ENCODE measurements at regions of chr6 and their contacts with region 1.

Region 1: GRCh38 chr6:52162940-52163908 is 23.0 kb upstream of the IL17A start:
- DNase-seq: no peak
- H3K4me3 Mint-ChIP-seq: no peak overlapping the region
- H3K27ac Mint-ChIP-seq: peak overlapping the region; percentile 60
- H3K4me1 Mint-ChIP-seq: peaks cover 44% of the 10 kb centered on the region
- H3K27me3 Mint-ChIP-seq: peaks cover 30% of the 10 kb centered on the region

Region 2: DNA sequence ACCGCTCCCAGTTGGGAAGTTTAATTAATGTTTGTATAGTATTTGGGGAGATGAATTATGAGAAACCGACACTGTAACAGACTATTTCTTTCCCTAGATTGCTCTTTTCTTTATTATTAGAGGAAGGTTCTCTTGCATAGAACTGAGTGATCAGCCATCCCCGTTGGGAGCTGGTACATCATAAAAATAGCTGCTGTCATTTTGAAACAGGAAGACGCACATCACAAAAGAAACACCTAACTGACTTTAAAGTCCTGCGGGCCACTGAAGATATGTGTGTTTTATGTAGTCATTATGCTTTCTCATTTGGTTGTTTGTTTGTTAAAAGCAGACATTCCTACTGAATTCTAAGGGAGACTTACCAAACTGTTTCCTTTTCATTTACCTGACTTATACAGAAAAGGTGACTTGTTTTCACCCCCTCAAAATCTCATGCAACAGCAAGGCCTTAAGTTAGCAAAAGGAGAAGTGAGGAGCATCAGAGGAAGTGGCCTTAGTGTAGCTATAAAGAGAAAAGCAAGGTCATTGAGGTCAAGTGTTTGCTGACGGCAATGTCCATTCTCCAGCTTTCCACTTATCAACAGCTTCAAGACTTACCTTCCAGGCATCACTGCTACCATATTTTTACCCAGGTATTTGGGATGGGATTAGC is 166.8 kb before region 1 on chr6:
- CTCF ChIA-PET with region 1: no interaction called
- POLR2A ChIA-PET with region 1: no interaction called
- intact Hi-C with region 1: no loop called
- DNase-seq: no peak
- H3K4me3 Mint-ChIP-seq: no peak overlapping the region
- H3K27ac Mint-ChIP-seq: no peak overlapping the region
- H3K4me1 Mint-ChIP-seq: no peaks in the 10 kb centered on the region
- H3K27me3 Mint-ChIP-seq: peaks cover 20% of the 10 kb centered on the region

Region 3: GRCh38 chr6:52201046-52201445 is 37.8 kb after region 1 on chr6:
- CTCF ChIA-PET with region 1: no interaction called
- POLR2A ChIA-PET with region 1: no interaction called
- intact Hi-C with region 1: loop called (anchors 2 kb)
- DNase-seq: no peak
- H3K4me3 Mint-ChIP-seq: no peak overlapping the region
- H3K27ac Mint-ChIP-seq: peak overlapping the region; percentile 61
- H3K4me1 Mint-ChIP-seq: peaks cover 9% of the 10 kb centered on the region
- H3K27me3 Mint-ChIP-seq: peaks cover 22% of the 10 kb centered on the region

Region 4: DNA sequence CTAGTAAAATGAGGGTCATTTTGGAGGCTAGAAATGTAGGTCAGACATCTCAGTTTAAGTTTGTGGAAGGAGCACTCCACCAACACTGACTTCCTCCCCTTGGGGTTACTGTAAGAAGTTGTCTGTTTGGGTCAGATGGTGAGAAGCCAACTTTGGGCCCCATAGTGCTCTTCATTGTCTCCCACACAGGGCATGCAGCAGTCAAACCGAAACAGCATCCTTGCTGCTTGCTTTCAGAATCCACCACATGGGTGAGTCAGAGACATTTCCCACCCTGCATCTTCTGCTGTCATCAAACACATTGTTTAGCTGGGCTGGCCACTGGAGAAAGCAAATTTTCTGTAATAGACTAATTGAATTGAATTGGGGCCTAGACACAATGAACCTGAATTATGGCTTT is 64.3 kb after region 1 on chr6:
- CTCF ChIA-PET with region 1: interaction called, 52 read pairs
- POLR2A ChIA-PET with region 1: no interaction called
- intact Hi-C with region 1: loop called (anchors 1 kb)
- DNase-seq: peak; percentile 90
- H3K4me3 Mint-ChIP-seq: no peak overlapping the region
- H3K27ac Mint-ChIP-seq: no peak overlapping the region
- H3K4me1 Mint-ChIP-seq: peaks cover 20% of the 10 kb centered on the region
- H3K27me3 Mint-ChIP-seq: peaks cover 39% of the 10 kb centered on the region

Region 5: GRCh38 chr6:52253494-52253893 is 90.3 kb after region 1 on chr6:
- CTCF ChIA-PET with region 1: interaction called, 120 read pairs
- POLR2A ChIA-PET with region 1: interaction called, 4 read pairs
- intact Hi-C with region 1: loop called (anchors 1 kb)
- DNase-seq: peak; percentile 73
- H3K4me3 Mint-ChIP-seq: no peak overlapping the region
- H3K27ac Mint-ChIP-seq: no peak overlapping the region
- H3K4me1 Mint-ChIP-seq: peaks cover 41% of the 10 kb centered on the region
- H3K27me3 Mint-ChIP-seq: peaks cover 44% of the 10 kb centered on the region

Region 6: DNA sequence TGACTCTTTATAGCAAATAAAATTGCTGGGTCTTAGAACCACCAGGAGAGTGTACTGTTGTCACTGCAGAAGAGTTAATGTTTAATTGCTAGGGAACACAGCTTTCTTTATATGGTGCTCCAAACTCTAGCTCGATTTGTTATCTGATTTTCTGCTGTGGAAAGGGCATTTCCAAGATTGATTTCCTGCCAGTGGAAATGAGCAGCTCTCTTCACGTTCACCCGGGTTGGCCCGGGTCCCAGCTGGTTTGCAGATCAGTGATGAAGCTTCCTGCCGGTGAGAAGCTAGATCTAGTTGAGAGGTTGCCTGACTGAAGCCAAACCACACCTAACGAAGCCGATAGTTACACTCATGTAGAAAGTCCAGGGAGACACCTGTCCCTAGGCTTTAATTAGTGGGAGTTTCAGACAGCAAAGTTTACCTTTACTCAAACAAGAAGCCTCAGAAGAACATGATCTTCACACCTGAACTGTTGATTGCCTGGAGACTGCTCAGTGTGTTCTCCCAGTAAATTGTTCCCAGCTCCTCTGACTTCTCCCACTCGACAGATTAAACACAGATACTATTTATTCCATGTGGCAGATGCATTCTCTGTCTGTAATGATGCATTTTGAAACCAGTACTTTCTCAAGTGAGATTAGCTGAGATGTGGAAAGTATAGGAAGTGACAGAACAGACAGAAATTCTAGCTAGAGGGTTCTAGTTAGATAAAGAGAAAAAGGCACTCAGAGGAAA is 226.6 kb after region 1 on chr6:
- CTCF ChIA-PET with region 1: interaction called, 6 read pairs
- POLR2A ChIA-PET with region 1: no interaction called
- intact Hi-C with region 1: loop called (anchors 1 kb)
- DNase-seq: peak; percentile 74
- H3K4me3 Mint-ChIP-seq: peak overlapping the region; percentile 47
- H3K27ac Mint-ChIP-seq: peak overlapping the region; percentile 76
- H3K4me1 Mint-ChIP-seq: peaks cover 82% of the 10 kb centered on the region
- H3K27me3 Mint-ChIP-seq: no peaks in the 10 kb centered on the region

Measured in activated CD4-positive, alpha-beta memory T cell treated with anti-CD3 and anti-CD28 coated beads for 36 hours (primary cell).